Mammary epithelial cell (primary cell): ENCODE measurements at regions of chr9 and their contacts with region 1.

Region 1: GRCh38 chr9:130327070-130327780 is 61.7 kb downstream of the HMCN2 start:
- DNase-seq: no peak
- H3K4me3 ChIP-seq: no peak overlapping the region
- H3K27ac ChIP-seq: no peak overlapping the region
- H3K4me1 ChIP-seq: peaks cover 12% of the 10 kb centered on the region
- H3K27me3 ChIP-seq: peaks cover 4% of the 10 kb centered on the region
- CTCF ChIP-seq: peak in 1 of 2 donors; percentile 8

Region 2: DNA sequence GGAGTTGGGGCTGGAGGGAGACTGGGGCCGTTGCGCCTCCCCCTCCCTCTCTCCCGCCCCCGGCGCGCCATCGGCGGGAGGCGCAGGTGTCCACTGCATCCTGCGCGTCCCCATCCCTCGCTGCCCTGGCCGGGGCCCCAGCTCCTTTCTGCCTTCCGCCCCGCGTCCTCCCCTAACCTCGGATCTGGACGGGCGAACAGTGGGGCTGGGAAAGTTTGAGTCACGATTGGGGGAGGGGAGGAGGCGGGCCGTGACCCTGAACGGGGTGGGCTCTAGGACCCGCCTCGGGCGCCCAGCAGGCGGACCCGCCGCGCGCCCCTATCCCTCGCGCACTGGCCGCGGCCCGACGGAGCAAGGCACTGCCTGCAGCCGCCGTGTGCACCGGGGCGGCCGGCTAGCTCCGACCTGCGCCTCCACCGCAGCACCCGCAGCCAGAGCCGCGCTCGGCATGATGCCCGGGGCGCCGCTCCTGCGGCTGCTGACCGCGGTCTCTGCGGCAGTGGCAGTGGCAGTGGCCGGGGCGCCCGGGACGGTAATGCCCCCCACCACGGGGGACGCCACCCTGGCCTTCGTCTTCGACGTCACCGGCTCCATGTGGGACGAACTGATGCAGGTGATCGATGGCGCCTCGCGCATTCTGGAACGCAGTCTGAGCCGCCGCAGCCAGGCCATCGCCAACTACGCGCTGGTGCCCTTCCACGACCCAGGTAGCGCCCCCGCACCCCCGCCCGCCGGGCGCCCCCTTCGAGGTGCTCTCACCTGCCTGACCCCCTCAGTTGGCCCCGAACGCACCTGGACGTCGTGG is 61.6 kb before region 1 on chr9 and contains the start of gene HMCN2:
- CTCF ChIA-PET with region 1: no interaction called
- dilution Hi-C with region 1: no loop called
- in situ Hi-C with region 1: no loop called
- intact Hi-C with region 1: no loop called
- DNase-seq: peak; percentile 23
- H3K4me3 ChIP-seq: peak within 1 kb of the TSS in 1 of 3 experiments; percentile 2
- H3K27ac ChIP-seq: no peak within 1 kb of the TSS
- H3K4me1 ChIP-seq: peaks cover 11% of the 10 kb centered on the region
- H3K27me3 ChIP-seq: peaks cover 15% of the 10 kb centered on the region
- CTCF ChIP-seq: no peak
- total RNA-seq, gene HMCN2: under 0.01 to 0.14 TPM

Region 3: DNA sequence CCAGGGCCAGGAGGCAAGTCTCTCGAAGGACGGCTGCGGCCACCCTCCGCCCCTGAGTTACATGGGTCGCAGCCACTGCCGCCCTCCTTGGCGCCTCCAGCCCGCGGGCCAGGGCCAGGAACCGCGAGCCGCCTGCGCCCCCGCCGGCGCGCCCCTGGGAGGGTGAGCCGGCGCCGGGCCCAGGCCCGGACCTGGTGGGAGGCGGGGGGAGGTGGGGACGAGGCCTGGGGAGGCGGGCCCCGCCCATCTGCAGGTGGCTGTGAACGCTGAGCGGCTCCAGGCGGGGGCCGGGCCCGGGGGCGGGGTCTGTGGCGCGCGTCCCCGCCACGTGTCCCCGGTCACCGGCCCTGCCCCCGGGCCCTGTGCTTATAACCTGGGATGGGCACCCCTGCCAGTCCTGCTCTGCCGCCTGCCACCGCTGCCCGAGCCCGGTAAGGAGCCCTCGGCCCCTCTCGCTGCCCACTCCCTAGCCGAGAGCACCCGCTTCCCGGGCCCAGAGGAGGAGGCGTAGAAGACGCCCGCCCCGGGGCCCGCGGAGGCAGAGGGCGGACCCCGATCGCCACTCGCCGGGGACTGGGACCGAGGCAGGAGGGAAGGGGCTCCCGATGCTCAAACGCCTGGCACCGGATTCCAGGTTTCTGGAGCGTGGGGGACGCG is 117.5 kb after region 1 on chr9 and contains the start of gene ASS1:
- CTCF ChIA-PET with region 1: no interaction called
- dilution Hi-C with region 1: no loop called
- in situ Hi-C with region 1: no loop called
- intact Hi-C with region 1: loop called (anchors 5 kb)
- DNase-seq: peak; percentile 29
- H3K4me3 ChIP-seq: peak within 1 kb of the TSS; percentile 61 to 62 (median 62)
- H3K27ac ChIP-seq: peak within 1 kb of the TSS; percentile 25
- H3K4me1 ChIP-seq: peaks cover 36% of the 10 kb centered on the region
- H3K27me3 ChIP-seq: no peaks in the 10 kb centered on the region
- CTCF ChIP-seq: no peak
- total RNA-seq, gene ASS1: 58.7 to 683 TPM